Posterior vena cava (tissue), 2 donors: ENCODE measurements at regions of chr5 and their contacts with region 1.

Region 1: DNA sequence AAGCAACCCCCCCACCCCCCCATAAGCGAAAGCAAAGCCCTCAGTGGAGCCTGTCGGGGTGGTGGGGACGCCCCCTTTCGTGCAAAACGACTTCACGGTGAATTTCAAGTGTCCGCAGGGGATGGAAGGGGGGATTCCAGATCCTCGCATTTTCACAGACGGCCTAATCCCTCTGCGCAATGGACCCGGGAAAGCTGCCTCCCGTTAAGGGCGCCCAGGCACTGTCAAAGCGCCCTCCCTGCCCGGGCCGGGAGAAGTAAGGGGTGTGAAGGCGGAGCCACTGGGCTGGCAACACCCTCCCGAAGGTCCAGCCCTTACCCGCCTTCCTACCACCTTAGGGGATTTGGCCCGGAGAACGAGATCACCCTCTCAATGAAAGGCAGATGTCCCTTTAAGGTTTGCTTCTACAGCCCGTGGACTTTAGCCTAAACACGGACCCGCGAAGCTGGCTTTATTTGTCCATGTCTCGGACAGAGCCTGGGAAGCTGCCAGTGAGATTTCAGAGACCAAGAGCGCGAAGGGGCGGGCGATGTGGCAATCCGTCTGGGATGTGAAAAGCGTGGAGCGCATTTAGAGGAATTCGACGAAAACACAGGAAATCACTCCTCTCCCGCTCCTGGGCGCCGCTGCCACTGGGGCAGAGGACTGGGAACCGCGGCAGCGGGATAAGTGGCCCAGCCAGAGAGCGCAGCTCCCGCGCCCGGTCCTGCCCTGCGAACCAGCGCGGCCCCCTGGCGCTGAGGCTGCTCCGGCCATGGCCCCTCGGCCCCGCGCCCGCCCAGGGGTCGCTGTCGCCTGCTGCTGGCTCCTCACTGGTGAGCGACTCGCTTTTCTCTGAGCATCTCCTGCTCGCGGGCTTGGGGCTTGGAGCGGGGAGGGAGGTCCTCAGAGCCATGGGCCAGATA is at the starts of genes ITGA1 and PELO:
- DNase-seq: peak; percentile 94
- total RNA-seq, gene ITGA1: 134 to 213 TPM
- total RNA-seq, gene PELO: 49.4 to 61.8 TPM

Region 2: DNA sequence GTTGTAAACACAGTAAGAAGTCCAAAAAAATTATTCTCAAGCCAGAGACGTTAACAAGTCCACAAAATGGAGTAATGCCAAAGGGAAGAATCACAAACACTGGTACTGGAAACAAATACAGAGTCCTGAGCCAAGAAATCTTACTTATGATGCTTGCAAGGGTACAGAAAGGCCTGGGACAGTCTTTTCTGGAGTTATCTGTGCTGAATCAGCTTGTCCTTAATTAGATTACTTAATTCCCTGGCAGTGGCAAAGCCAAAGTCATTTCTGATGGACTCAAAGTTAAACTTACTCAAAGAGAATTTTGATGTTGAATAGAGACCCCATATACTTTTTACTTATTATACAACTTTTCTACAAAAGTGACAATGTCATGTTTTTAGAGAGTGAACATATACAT is 610.7 kb before region 1 on chr5:
- intact Hi-C with region 1: no loop called
- DNase-seq: no peak

Region 3: GRCh38 chr5:52693280-52693679 is 94.6 kb before region 1 on chr5:
- intact Hi-C with region 1: loop called in 1 of 2 experiments (anchors 5 kb)
- DNase-seq: peak; percentile 57

Region 4: DNA sequence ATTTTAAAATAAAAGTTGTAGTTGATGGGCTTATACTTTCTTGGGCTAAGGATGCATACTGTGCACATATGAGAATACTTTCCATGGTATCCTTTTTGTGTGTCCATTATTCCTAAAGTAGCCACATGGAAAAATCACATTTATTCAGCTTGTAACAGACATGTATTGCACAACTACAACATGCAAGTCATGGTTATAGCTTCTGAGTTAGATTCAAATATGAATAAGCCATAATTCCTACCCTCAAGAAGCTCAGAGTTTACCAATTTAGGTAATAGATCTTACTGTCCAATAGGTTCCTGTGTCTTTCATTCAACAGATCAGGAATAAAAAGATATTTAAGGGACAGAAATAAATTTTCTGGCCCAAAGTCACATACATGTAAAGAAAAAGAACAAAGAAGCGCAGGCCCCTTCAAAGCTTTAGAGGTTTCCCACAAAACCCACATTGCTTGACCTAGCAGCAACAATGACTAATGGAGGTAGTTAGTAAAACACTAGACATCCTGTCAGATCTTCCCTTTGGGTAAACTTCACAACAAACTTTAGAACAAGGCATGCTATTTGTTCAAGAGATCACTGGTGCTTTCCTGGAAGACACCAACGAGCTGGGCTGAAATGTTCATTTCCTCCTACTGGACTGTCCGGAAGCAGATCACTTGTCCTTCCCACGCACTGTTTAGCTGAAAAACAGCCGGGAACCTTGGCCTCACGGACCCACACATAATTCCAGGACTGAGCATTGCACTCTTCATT is 78.5 kb before region 1 on chr5:
- intact Hi-C with region 1: no loop called
- DNase-seq: no peak

Region 5: DNA sequence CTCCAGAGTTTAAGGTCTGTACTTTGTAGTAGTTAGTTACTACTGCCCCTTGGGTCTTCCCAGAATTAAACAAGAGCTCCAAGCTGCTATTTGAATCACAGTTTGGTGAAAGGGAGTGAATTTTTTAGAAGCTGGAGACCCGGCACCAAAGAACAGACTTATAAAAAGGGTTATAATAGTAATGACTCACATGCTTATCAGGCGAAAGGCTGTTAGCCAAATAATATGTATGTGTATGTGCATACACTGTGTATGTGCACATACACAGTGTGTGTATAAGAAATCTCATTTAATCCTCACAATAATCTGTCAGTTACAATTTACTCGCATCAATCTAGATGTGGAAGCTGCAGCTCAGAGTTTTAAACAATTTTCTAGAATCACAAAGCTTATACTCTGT is 59.6 kb before region 1 on chr5:
- intact Hi-C with region 1: loop called (anchors 2 to 5 kb)
- DNase-seq: no peak